OCI-LY7 (cell line): ENCODE measurements at regions of chr9 and their contacts with region 1.

Region 1: DNA sequence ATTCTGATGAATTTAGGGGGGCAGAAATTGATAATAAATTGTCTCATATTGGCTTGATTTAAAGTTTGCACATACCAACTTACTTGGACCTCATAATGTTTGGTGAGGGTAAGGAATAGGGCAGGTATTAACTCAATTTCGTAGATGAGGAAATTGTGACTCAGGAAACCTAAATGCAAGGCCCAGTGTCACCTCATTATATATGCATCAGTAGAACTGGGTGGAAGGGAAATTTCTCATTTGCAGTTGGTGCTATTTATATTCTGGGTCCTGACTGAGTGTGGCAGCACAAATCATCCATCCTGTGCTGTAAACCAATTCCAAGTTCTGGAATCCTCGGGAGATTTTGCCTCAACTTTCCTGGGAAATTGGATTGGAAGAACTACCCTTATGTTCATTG is 103.0 kb downstream of the SPATA31D1 start:
- DNase-seq: peak; percentile 70
- H3K4me3 ChIP-seq: peak overlapping the region; percentile 55
- H3K27ac ChIP-seq: peak overlapping the region; percentile 52
- H3K4me1 ChIP-seq: peaks cover 44% of the 10 kb centered on the region
- CTCF ChIP-seq: no peak

Region 2: GRCh38 chr9:82080265-82080664 is 11.3 kb before region 1 on chr9:
- CTCF ChIA-PET with region 1: interaction called, 3 read pairs
- POLR2A ChIA-PET with region 1: interaction called, 20 read pairs
- intact Hi-C with region 1: no loop called
- DNase-seq: peak; percentile 86
- H3K4me3 ChIP-seq: peak overlapping the region; percentile 7
- H3K27ac ChIP-seq: peak overlapping the region; percentile 71
- H3K4me1 ChIP-seq: peaks cover 33% of the 10 kb centered on the region
- CTCF ChIP-seq: no peak